Heart left ventricle (tissue), 16 donors: ENCODE measurements at regions of chr6 and their contacts with region 1.

Region 1: GRCh38 chr6:110378552-110378951 is 20.4 kb upstream of the METTL24 start:
- DNase-seq: no peak
- ATAC-seq: no peak
- H3K4me3 ChIP-seq: no peak overlapping the region
- H3K27ac ChIP-seq: no peak overlapping the region
- H3K4me1 ChIP-seq: no peaks in the 10 kb centered on the region
- H3K27me3 ChIP-seq: no peaks in the 10 kb centered on the region
- CTCF ChIP-seq: no peak
- POLR2A ChIP-seq: no peak

Region 2: DNA sequence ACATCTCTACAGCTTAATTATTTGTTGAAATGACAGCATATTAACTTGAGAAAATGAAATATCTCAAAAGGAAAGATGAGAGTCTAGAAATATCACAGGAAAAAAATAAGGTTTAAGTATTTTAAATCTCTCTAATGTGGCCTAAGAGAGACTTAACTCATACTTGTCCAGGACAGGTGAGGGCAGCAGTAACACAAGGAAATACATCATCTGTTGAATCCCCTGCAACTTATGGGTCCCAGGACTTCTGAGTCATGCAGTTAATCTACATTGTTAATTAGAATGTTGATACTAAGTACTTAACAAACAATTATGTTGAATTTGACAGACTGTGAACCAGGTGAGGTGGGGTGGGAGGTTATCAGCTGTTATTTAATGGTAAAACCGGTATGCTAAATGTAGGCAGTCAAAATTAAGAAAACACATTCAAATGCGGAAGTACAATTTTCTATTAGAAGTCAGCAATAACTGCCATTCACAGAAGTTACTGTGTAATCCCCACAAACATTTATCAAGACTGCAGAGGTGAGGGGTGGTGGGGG is 1195.4 kb before region 1 on chr6:
- intact Hi-C with region 1: no loop called
- DNase-seq: no peak
- ATAC-seq: no peak
- H3K4me3 ChIP-seq: no peak overlapping the region
- H3K27ac ChIP-seq: no peak overlapping the region
- H3K4me1 ChIP-seq: peaks cover 0 to 7% (median 0%) of the 10 kb centered on the region in 12 donors
- H3K27me3 ChIP-seq: peaks cover 0 to 4% (median 0%) of the 10 kb centered on the region in 9 donors
- CTCF ChIP-seq: no peak
- POLR2A ChIP-seq: no peak

Region 3: GRCh38 chr6:110173506-110174132 is 204.9 kb before region 1 on chr6:
- intact Hi-C with region 1: loop called in 1 of 10 experiments (anchors 5 kb)
- DNase-seq: no peak
- ATAC-seq: no peak
- H3K4me3 ChIP-seq: no peak overlapping the region
- H3K27ac ChIP-seq: no peak overlapping the region
- H3K4me1 ChIP-seq: peaks cover 0 to 6% (median 2%) of the 10 kb centered on the region in 12 donors
- H3K27me3 ChIP-seq: no peaks in the 10 kb centered on the region
- CTCF ChIP-seq: no peak
- POLR2A ChIP-seq: no peak